PC-9 (cell line): ENCODE measurements at regions of chr3 and their contacts with region 1.

Region 1: DNA sequence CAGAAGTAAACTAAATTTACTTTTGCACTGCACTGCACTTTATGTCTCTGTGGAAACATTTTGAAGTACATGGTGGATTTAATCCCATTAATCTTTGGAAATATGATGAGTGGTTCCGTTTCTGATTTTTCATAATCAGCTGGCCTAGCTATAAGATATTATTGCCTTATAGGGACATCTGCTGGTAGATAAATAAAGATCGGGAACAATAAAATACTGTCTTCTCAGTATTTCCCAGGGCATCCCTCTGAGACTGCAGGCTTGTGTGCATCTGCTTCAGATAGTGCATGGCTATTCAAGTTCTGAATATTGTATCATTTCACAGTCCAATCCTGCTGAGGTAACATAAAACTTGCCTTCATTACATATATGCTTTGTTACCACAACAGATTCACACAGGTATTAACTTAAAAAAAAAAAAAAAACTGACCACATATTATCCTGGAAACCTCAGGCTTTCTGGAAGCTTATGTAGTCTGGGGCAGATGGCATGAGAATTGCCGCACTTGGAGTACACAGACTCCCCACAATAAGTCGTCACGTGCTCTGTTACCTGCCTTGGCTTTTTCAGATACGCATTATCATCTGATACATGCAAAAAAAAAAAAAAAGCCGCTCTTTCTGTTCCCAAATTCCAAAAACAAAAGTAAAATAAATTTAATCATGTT is 330.8 kb upstream of the AGTR1 start:
- DNase-seq: no peak
- H3K4me3 ChIP-seq: no peak overlapping the region
- H3K27ac ChIP-seq: no peak overlapping the region
- H3K4me1 ChIP-seq: no peaks in the 10 kb centered on the region
- H3K27me3 ChIP-seq: no peaks in the 10 kb centered on the region
- CTCF ChIP-seq: no peak; the same call in 1 of the 2 replicates

Region 2: DNA sequence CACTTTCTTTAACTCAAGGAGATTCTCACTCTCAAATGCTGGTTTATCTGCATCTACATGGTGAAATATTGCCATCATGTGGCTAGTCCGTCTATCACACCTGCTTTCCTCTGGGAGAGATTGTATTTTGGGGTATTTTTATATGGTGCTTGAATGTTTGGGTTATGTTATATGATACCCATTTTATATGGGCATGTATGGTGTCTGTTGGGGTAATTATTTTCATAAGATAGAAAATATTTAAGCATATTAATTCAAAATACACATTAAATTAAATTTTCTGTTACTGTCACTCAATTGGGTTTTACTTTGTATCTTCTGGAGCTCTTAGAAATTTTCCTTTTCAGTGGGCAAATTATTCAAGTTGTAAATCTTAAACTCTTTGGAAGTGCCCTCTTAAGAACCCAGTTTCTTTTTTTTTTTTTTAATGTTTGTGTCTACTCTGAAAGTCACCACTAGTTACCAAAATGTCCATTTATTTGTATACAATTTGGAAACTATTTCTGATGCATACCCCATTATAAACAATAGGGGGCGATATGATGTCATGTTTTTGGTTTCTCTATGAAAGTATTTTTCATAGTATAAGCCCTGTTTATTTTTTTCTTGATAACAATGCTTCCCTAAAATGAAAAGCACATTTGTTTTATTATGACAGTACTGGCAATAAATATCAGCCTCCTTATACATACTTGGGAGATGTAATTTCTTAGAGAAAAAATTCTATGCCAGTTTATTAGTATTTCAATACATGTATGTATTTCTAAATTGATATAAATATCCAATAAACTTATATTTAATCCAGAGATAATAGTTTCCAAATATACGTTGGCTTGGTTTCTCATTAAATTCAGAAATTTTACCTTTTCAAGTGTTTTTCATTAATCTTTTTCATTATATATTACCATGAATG is 1725.7 kb before region 1 on chr3:
- CTCF ChIA-PET with region 1: no interaction called
- POLR2A ChIA-PET with region 1: no interaction called
- intact Hi-C with region 1: loop called (anchors 5 kb)
- DNase-seq: peak in 1 of 2 experiments; percentile 32
- H3K4me3 ChIP-seq: no peak overlapping the region
- H3K27ac ChIP-seq: no peak overlapping the region
- H3K4me1 ChIP-seq: no peaks in the 10 kb centered on the region
- H3K27me3 ChIP-seq: no peaks in the 10 kb centered on the region
- CTCF ChIP-seq: peak; percentile 65

Region 3: GRCh38 chr3:147119989-147120388 is 1246.9 kb before region 1 on chr3:
- CTCF ChIA-PET with region 1: no interaction called
- POLR2A ChIA-PET with region 1: no interaction called
- intact Hi-C with region 1: loop called (anchors 10 kb)
- DNase-seq: no peak
- H3K4me3 ChIP-seq: no peak overlapping the region
- H3K27ac ChIP-seq: no peak overlapping the region
- H3K4me1 ChIP-seq: no peaks in the 10 kb centered on the region
- H3K27me3 ChIP-seq: no peaks in the 10 kb centered on the region
- CTCF ChIP-seq: peak; percentile 57

Region 4: DNA sequence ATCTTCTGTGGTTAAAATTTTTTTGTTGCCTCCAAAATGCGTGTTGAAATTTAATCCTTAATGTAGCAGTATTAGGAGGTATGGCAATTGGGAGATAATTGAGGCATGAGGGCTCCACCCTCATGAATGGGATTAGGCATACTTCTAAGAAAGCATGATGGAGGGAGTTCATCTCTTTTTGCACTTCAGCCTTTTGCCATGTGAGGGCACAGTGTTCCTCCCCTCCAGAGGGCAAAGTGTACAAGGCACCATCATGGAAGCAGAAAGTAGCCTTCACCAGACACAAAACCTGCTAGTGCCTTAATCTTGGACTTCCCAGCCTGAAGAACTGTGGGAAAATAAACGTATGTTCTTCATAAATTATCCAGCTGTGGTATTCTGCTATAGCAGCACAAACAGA is 528.2 kb before region 1 on chr3:
- CTCF ChIA-PET with region 1: no interaction called
- POLR2A ChIA-PET with region 1: interaction called, 23 read pairs
- intact Hi-C with region 1: no loop called
- DNase-seq: no peak
- H3K4me3 ChIP-seq: no peak overlapping the region
- H3K27ac ChIP-seq: no peak overlapping the region
- H3K4me1 ChIP-seq: no peaks in the 10 kb centered on the region
- H3K27me3 ChIP-seq: no peaks in the 10 kb centered on the region
- CTCF ChIP-seq: no peak

Region 5: GRCh38 chr3:148309390-148310035 is 57.4 kb before region 1 on chr3:
- CTCF ChIA-PET with region 1: interaction called, 3 read pairs
- POLR2A ChIA-PET with region 1: no interaction called
- intact Hi-C with region 1: loop called (anchors 5 kb)
- DNase-seq: peak in 1 of 2 experiments; percentile 20
- H3K4me3 ChIP-seq: no peak overlapping the region
- H3K27ac ChIP-seq: no peak overlapping the region
- H3K4me1 ChIP-seq: no peaks in the 10 kb centered on the region
- H3K27me3 ChIP-seq: no peaks in the 10 kb centered on the region
- CTCF ChIP-seq: peak; percentile 65